ENCODE measurements at regions of chr1 and their contacts with region 1.

Region 1: GRCh38 chr1:44485229-44485933 is 80.3 kb downstream of the RNF220 start:
- DNase-seq: peak; percentile 69
- H3K4me3 ChIP-seq: no peak overlapping the region
- H3K27ac ChIP-seq: no peak overlapping the region
- H3K4me1 ChIP-seq: peaks cover 21% of the 10 kb centered on the region
- H3K27me3 ChIP-seq: no peaks in the 10 kb centered on the region
- CTCF ChIP-seq: no peak

Region 2: DNA sequence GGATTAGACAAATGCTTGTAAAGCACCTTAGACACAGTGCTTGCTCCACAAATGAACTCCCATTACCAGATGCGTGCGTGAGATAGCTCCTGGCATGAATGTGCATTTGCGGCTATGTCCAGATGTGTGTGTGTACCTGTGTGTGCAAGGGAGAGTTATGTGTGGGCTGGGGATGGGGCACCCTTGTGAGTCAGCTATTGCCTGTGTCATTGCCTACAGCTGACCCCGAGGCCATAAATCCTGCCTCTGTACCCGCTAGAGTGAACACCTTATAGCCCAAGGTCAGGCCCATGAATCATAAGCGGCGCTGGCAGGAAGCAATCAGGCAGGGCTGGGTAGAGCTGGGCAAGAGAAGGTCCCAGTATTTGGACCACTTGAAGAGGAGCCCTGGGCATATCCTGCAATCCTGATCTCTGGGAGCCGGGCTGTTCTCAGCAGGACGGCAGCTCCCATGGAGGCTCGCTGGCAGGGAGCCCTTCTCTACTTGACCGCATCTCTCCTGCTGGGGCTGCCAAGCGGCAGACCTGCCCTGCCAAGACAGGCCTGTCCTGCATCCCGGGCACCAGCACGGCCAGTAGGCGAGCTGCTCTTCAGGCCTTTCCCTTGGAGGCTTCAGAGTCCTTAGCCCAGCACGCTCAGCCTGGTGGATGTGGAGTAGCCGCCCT is 102.5 kb after region 1 on chr1:
- CTCF ChIA-PET with region 1: no interaction called
- dilution Hi-C with region 1: loop called (anchors 5 kb)
- in situ Hi-C with region 1: no loop called
- intact Hi-C with region 1: no loop called
- DNase-seq: peak; percentile 2
- H3K4me3 ChIP-seq: no peak overlapping the region
- H3K27ac ChIP-seq: no peak overlapping the region
- H3K4me1 ChIP-seq: peaks cover 5% of the 10 kb centered on the region
- H3K27me3 ChIP-seq: no peaks in the 10 kb centered on the region
- CTCF ChIP-seq: no peak